Heart right ventricle (tissue), 16 donors: ENCODE measurements at regions of chr5 and their contacts with region 1.

Region 1: DNA sequence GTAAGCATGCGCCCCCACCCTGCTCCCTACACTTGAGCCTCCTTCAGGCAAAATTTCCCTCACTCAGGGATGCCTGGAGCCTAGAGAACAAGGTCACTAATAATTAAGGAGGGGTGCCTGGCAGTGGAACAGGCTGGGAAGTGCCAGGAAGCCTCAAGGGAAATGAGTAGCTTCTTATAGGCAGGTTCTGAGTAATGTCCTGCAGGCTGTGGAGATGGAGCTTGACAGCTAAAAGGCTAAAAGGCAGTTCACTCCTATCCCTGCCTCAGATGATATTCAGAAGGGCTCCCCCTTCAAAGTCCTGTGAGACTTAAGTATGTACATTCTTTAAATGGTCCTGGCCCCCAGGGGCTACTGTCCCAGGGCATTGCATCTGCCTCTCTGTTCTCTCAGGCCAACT is 65.5 kb upstream of the SMIM32 start:
- DNase-seq: no peak
- ATAC-seq: no peak
- H3K4me3 ChIP-seq: no peak overlapping the region
- H3K27ac ChIP-seq: no peak overlapping the region
- H3K4me1 ChIP-seq: no peaks in the 10 kb centered on the region
- H3K27me3 ChIP-seq: peaks cover 0 to 50% (median 33%) of the 10 kb centered on the region in 7 donors
- CTCF ChIP-seq: no peak

Region 2: DNA sequence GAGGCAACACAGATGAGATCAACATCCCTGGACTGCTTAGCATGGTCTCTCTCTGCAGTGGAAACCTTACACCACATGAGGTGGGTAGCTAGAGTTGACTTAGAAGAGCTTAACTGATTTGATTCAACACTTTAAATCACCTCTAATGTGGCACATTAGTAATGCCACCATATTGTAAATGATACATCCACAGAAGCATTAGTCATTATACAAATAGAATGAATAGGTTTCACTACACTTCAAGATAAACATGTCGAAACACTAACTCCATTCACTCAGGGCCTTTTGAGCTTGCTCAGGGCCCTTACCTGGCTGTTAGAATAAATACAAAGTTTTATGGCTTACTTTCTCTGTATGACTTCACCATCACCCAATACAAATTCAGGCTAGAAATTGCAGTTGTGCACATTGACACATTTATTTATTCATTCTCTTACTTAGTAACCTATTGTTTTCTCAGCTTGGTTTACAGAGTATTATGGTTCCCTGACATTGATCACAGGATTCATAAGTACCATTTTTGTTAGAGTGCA is 135.2 kb before region 1 on chr5:
- intact Hi-C with region 1: no loop called
- DNase-seq: no peak
- ATAC-seq: no peak
- H3K4me3 ChIP-seq: no peak overlapping the region
- H3K27ac ChIP-seq: no peak overlapping the region
- H3K4me1 ChIP-seq: peaks cover 0 to 1% (median 0%) of the 10 kb centered on the region in 9 donors
- H3K27me3 ChIP-seq: peaks cover 0 to 4% (median 0%) of the 10 kb centered on the region in 7 donors
- CTCF ChIP-seq: no peak

Region 3: GRCh38 chr5:136424835-136425584 is 166.5 kb after region 1 on chr5:
- intact Hi-C with region 1: loop called in 2 of 10 experiments (anchors 5 to 10 kb)
- DNase-seq: peak; percentile 59 to 66
- ATAC-seq: peak in 3 of 8 donors; percentile 46 to 52 (median 51)
- H3K4me3 ChIP-seq: no peak overlapping the region
- H3K27ac ChIP-seq: no peak overlapping the region
- H3K4me1 ChIP-seq: no peaks in the 10 kb centered on the region
- H3K27me3 ChIP-seq: peaks cover 0 to 22% (median 10%) of the 10 kb centered on the region in 7 donors
- CTCF ChIP-seq: peak; percentile 18 to 70 (median 62)